ENCODE measurements at regions of chr18 and their contacts with region 1.

Region 1: DNA sequence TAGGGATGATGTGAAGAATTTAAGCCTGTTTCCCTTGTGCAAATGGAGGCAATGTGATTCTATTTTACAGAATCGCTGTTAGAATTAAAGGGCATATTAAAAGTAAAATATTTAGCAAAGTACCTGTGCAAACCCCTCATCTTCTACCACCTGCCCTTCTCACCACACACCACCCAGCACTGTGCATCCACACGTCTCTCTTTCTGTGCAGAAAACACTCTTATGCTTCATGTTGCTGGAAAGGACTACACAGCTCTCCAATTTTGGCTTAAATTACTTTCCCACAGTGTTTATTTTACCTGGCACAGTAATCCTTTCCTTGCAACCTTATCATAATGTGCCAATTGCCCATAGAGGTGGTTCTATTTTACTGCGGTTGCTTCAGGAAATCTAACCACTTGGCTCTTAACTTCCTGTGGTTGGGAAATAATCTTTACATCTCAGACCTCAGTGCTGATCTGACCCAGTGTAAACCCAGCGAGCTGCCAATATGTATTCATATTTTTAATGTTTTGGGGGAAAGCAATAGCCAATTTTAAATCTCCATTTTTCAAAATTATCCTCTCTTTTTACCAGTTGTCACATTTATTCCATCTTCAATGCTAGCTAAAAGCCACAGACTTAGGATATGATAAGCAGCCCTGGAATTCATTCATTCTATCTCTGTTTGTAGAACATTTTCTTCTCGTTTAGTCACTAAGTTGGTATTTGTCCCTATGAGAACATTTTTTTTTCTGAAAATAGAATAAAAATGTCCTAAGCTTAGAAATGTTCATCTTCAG is 250.9 kb downstream of the DSEL start:
- DNase-seq: peak in 2 of 9 experiments; percentile 38 to 52
- ATAC-seq: peak; percentile 40
- H3K4me3 ChIP-seq: peak overlapping the region in 1 of 2 experiments; percentile 1
- H3K4me3 Mint-ChIP-seq: peak overlapping the region; percentile 44
- H3K27ac ChIP-seq: no peak overlapping the region
- H3K27ac Mint-ChIP-seq: no peak overlapping the region
- H3K4me1 ChIP-seq: peaks cover 29% of the 10 kb centered on the region
- H3K4me1 Mint-ChIP-seq: peaks cover 43% of the 10 kb centered on the region
- H3K27me3 ChIP-seq: no peaks in the 10 kb centered on the region
- H3K27me3 Mint-ChIP-seq: no peaks in the 10 kb centered on the region
- CTCF ChIP-seq: no peak

Region 2: DNA sequence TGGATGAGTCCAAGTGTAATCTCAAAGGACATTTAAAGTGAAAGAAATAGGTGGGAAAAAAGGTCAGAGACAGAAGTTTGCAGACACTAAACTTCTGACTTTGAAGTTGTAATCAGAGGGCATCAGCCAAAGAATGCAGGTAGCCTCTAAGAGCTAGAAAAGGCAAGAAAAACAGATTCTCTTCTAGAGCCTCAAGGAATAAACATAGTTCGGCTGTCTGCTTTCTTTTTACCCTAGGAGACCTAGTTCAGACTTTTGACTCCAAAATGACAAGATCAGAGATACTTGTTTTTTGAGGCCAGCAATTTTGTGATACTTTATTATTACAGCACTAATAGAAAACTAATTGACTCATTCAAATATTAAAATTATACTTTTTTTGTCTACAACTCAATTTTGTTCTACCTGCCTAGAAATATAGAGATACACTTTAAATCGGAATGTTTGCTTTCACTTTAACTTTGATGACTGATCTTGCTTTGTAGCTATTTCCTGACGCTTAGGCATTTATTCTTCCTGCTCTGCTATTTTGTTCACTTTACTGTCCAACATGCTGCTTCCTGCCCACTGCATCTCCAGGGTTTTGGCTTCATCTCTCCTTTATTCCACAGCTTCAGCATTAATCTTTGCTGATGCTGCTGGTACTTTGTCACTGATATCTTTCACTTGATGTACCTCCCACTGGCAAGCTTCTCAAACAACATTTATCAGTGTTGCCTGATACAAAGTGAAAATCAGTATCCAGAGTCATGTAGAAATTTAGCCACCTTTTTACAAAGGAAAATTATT is 21.7 kb before region 1 on chr18:
- CTCF ChIA-PET with region 1: no interaction called
- POLR2A ChIA-PET with region 1: interaction called, 3 read pairs
- intact Hi-C with region 1: loop called in 1 of 2 experiments (anchors 2 kb)
- DNase-seq: peak in 2 of 9 experiments; percentile 10 to 23
- ATAC-seq: peak; percentile 38
- H3K4me3 ChIP-seq: peak overlapping the region; percentile 21 to 33
- H3K4me3 Mint-ChIP-seq: peak overlapping the region; percentile 84
- H3K27ac ChIP-seq: peak overlapping the region; percentile 7 to 58
- H3K27ac Mint-ChIP-seq: peak overlapping the region; percentile 92
- H3K4me1 ChIP-seq: peaks cover 31% of the 10 kb centered on the region
- H3K4me1 Mint-ChIP-seq: peaks cover 38% of the 10 kb centered on the region
- H3K27me3 ChIP-seq: no peaks in the 10 kb centered on the region
- H3K27me3 Mint-ChIP-seq: no peaks in the 10 kb centered on the region
- CTCF ChIP-seq: no peak

Region 3: GRCh38 chr18:67276638-67277037 is 11.0 kb after region 1 on chr18:
- CTCF ChIA-PET with region 1: no interaction called
- POLR2A ChIA-PET with region 1: no interaction called
- intact Hi-C with region 1: no loop called
- DNase-seq: no peak
- ATAC-seq: no peak
- H3K4me3 ChIP-seq: no peak overlapping the region
- H3K4me3 Mint-ChIP-seq: no peak overlapping the region
- H3K27ac ChIP-seq: no peak overlapping the region
- H3K27ac Mint-ChIP-seq: no peak overlapping the region
- H3K4me1 ChIP-seq: no peaks in the 10 kb centered on the region
- H3K4me1 Mint-ChIP-seq: peaks cover 12% of the 10 kb centered on the region
- H3K27me3 ChIP-seq: no peaks in the 10 kb centered on the region
- H3K27me3 Mint-ChIP-seq: peaks cover 5% of the 10 kb centered on the region
- CTCF ChIP-seq: no peak

Region 4: DNA sequence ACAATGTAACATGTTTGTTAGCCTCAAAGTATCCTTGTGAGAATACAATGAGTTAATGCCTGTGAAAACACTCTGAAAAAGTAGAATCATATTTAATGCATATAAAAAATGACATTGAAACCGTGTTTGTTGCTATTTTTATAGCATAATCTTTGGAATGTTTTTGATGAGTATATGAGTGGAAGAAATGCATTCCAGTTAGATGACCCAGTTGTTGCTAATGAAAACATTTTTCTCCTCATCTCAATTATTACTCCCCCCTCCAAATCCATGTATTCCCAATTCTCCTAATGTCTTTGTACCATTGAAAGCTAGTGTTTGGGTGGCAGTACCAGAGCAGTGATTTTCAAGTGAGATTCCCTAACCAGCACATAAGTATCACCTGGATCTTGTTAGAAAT is 318.0 kb after region 1 on chr18:
- CTCF ChIA-PET with region 1: no interaction called
- POLR2A ChIA-PET with region 1: no interaction called
- intact Hi-C with region 1: no loop called
- DNase-seq: no peak
- ATAC-seq: no peak
- H3K4me3 ChIP-seq: no peak overlapping the region
- H3K4me3 Mint-ChIP-seq: no peak overlapping the region
- H3K27ac ChIP-seq: no peak overlapping the region
- H3K27ac Mint-ChIP-seq: no peak overlapping the region
- H3K4me1 ChIP-seq: no peaks in the 10 kb centered on the region
- H3K4me1 Mint-ChIP-seq: no peaks in the 10 kb centered on the region
- H3K27me3 ChIP-seq: no peaks in the 10 kb centered on the region
- H3K27me3 Mint-ChIP-seq: no peaks in the 10 kb centered on the region
- CTCF ChIP-seq: no peak

Measured in CD8-positive, alpha-beta T cell (primary cell).